ENCODE measurements at regions of chr17 and their contacts with region 1.

Region 1: GRCh38 chr17:29449865-29450671 is 59.9 kb downstream of the TAOK1 start:
- DNase-seq: no peak
- ATAC-seq: no peak
- H3K4me3 ChIP-seq: no peak overlapping the region
- H3K4me3 Mint-ChIP-seq: no peak overlapping the region
- H3K27ac ChIP-seq: no peak overlapping the region
- H3K27ac Mint-ChIP-seq: peak overlapping the region; percentile 71
- H3K4me1 ChIP-seq: peaks cover 12% of the 10 kb centered on the region
- H3K4me1 Mint-ChIP-seq: peaks cover 35% of the 10 kb centered on the region
- H3K27me3 ChIP-seq: no peaks in the 10 kb centered on the region
- H3K27me3 Mint-ChIP-seq: no peaks in the 10 kb centered on the region
- CTCF ChIP-seq: no peak

Region 2: DNA sequence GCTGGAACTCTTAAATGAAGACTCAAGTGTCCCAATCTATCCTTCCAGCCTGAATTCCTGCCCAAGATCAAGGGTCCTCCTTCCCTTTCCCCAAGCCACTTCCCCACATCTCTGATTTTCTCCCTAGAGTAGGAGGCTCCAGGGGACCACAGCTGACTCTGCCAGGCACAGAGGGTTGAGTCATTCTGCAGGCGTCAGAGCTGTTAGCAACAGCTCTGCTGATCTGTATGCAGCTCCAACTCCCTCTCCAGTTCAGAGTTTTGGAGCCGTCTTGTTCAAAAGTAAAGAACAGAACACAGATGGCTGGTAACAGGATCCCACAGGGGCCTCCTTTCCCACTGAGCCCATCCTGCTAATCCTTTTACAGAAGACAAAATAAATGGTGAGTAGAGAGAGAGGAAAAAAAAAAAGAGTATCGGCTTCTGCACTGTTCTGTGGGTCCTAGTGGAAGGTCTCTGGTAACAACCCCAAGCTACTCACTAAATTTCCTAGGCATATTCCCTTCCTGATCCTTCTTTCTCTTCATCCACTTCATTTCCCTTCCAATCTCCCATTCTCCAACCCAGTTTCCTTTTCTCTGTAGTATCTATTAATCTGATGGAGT is 73.3 kb before region 1 on chr17:
- CTCF ChIA-PET with region 1: no interaction called
- POLR2A ChIA-PET with region 1: no interaction called
- intact Hi-C with region 1: no loop called
- DNase-seq: no peak
- ATAC-seq: no peak
- H3K4me3 ChIP-seq: no peak overlapping the region
- H3K4me3 Mint-ChIP-seq: no peak overlapping the region
- H3K27ac ChIP-seq: no peak overlapping the region
- H3K27ac Mint-ChIP-seq: no peak overlapping the region
- H3K4me1 ChIP-seq: no peaks in the 10 kb centered on the region
- H3K4me1 Mint-ChIP-seq: no peaks in the 10 kb centered on the region
- H3K27me3 ChIP-seq: no peaks in the 10 kb centered on the region
- H3K27me3 Mint-ChIP-seq: no peaks in the 10 kb centered on the region
- CTCF ChIP-seq: no peak

Region 3: GRCh38 chr17:29389982-29390850 is 59.9 kb before region 1 on chr17 and contains the start of gene TAOK1:
- CTCF ChIA-PET with region 1: no interaction called
- POLR2A ChIA-PET with region 1: no interaction called
- intact Hi-C with region 1: loop called in 1 of 2 experiments (anchors 5 kb)
- DNase-seq: peak; percentile 93 to 99 (median 98)
- ATAC-seq: peak; percentile 89
- H3K4me3 ChIP-seq: peak within 1 kb of the TSS; percentile 88
- H3K4me3 Mint-ChIP-seq: peak within 1 kb of the TSS; percentile 99
- H3K27ac ChIP-seq: peak within 1 kb of the TSS; percentile 79 to 93
- H3K27ac Mint-ChIP-seq: peak within 1 kb of the TSS; percentile 97
- H3K4me1 ChIP-seq: peaks cover 20% of the 10 kb centered on the region
- H3K4me1 Mint-ChIP-seq: peaks cover 47% of the 10 kb centered on the region
- H3K27me3 ChIP-seq: no peaks in the 10 kb centered on the region
- H3K27me3 Mint-ChIP-seq: no peaks in the 10 kb centered on the region
- CTCF ChIP-seq: no peak
- total RNA-seq, gene TAOK1: 33.1 to 33.8 TPM

Region 4: GRCh38 chr17:29409963-29410362 is 40.1 kb before region 1 on chr17:
- CTCF ChIA-PET with region 1: no interaction called
- POLR2A ChIA-PET with region 1: no interaction called
- intact Hi-C with region 1: loop called in 1 of 2 experiments (anchors 1 kb)
- DNase-seq: no peak
- ATAC-seq: no peak
- H3K4me3 ChIP-seq: no peak overlapping the region
- H3K4me3 Mint-ChIP-seq: no peak overlapping the region
- H3K27ac ChIP-seq: no peak overlapping the region
- H3K27ac Mint-ChIP-seq: peak overlapping the region; percentile 74
- H3K4me1 ChIP-seq: no peaks in the 10 kb centered on the region
- H3K4me1 Mint-ChIP-seq: peaks cover 45% of the 10 kb centered on the region
- H3K27me3 ChIP-seq: no peaks in the 10 kb centered on the region
- H3K27me3 Mint-ChIP-seq: no peaks in the 10 kb centered on the region
- CTCF ChIP-seq: no peak

Measured in CD4-positive, alpha-beta T cell (primary cell).